ENCODE measurements at regions of chr18 and their contacts with region 1.

Region 1: DNA sequence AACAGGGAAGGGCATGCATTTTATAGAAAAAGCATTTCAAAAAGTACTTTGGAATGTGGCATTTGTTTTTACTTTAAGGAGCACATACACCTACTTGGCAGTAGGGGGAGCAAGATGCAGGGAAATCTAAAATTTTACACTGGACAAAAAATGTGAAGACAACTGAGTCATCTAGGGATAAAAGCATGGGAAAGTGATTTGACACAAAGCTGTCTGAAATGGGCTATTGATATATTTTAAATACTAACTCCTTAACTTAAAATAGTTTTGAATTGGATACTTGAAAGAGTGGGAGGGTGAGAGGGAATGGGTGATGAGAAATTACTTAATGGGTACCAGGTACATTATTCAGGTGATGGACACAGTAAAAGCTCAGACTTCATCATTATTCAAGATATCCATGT is 15.8 kb downstream of the TMEM200C start:
- DNase-seq: peak; percentile 8
- H3K4me3 ChIP-seq: no peak overlapping the region
- H3K27ac ChIP-seq: no peak overlapping the region
- H3K4me1 ChIP-seq: no peaks in the 10 kb centered on the region
- H3K27me3 ChIP-seq: no peaks in the 10 kb centered on the region
- CTCF ChIP-seq: peak; percentile 73 to 81

Region 2: GRCh38 chr18:5073026-5073944 is 806.2 kb before region 1 on chr18:
- CTCF ChIA-PET with region 1: no interaction called
- dilution Hi-C with region 1: no loop called
- in situ Hi-C with region 1: no loop called
- intact Hi-C with region 1: loop called (anchors 10 kb)
- DNase-seq: peak; percentile 4
- H3K4me3 ChIP-seq: no peak overlapping the region
- H3K27ac ChIP-seq: no peak overlapping the region
- H3K4me1 ChIP-seq: no peaks in the 10 kb centered on the region
- H3K27me3 ChIP-seq: no peaks in the 10 kb centered on the region
- CTCF ChIP-seq: peak; percentile 34 to 54

Region 3: DNA sequence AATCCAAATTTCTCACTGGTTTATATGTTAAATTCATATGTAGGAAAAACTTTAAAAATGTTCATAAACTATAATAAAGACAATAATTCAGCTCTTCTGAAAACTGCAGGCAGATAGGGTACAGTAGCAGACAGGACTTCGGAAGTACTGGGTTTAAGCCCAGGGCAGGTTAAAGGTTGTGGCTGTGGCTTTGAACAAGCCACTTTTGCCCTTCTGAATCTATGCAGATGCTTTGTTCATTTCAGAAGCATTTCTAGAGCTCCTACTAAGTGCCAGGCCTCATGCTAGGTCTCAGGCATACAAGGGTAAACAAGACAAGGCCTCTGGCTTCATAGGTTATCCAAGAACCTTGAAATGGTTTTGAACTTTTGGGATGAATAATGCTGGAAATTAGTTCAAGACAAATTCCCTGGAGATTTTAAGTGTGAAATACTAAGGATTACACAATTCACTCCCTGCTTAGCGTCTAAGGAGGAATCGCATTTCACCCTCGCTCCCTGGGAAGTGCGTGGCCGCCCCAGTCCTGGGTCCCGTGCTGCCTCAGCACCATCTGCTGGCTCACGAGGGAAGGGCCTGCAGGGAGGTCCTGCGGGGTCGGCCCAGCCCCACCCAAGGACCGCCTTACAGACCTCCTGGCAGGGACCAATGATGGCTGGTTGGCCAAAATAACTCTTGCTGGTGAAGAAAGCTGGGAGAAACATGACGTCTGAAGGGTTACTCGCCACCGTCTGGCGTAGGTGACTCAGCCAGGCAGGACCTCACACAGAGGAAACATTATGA is 602.9 kb after region 1 on chr18:
- CTCF ChIA-PET with region 1: no interaction called
- dilution Hi-C with region 1: no loop called
- in situ Hi-C with region 1: no loop called
- intact Hi-C with region 1: loop called (anchors 1 kb)
- DNase-seq: peak; percentile 93
- H3K4me3 ChIP-seq: no peak overlapping the region
- H3K27ac ChIP-seq: peak overlapping the region; percentile 29
- H3K4me1 ChIP-seq: peaks cover 7% of the 10 kb centered on the region
- H3K27me3 ChIP-seq: no peaks in the 10 kb centered on the region
- CTCF ChIP-seq: peak in 1 of 2 donors; percentile 37

Region 4: DNA sequence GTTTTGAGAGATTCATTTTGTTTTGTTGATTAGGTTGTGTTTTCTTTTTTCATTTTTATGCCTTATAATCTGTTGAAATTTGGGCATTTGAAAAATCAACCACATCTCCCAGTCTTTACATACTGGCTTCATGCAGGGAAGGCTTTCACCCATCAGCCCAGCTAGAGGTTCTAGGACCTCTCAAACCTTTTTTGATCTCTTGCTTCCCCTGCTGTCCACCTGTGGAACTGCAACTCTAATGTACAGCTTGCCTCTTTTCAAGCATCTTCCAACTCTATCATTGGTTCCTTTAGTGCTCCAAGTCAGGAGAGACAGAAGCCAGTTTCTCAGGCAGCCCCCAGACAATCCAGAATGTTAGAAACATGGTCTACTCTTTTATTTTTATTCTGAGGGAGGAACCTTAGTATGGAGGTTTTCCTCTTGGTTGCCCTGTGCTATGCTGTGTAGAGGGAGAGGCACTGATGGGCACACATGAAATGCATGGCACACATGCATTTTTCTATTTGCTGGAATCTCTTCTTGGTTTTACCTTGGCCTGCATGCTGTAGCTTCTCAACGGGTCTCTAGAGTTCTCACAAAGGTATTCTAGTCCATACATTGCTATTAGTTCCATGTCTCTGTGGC is 642.4 kb after region 1 on chr18:
- CTCF ChIA-PET with region 1: interaction called, 3 read pairs
- dilution Hi-C with region 1: no loop called
- in situ Hi-C with region 1: loop called (anchors 5 to 10 kb)
- intact Hi-C with region 1: loop called (anchors 1 kb)
- DNase-seq: peak; percentile 56
- H3K4me3 ChIP-seq: no peak overlapping the region
- H3K27ac ChIP-seq: no peak overlapping the region
- H3K4me1 ChIP-seq: no peaks in the 10 kb centered on the region
- H3K27me3 ChIP-seq: no peaks in the 10 kb centered on the region
- CTCF ChIP-seq: peak; percentile 85 to 94

Region 5: DNA sequence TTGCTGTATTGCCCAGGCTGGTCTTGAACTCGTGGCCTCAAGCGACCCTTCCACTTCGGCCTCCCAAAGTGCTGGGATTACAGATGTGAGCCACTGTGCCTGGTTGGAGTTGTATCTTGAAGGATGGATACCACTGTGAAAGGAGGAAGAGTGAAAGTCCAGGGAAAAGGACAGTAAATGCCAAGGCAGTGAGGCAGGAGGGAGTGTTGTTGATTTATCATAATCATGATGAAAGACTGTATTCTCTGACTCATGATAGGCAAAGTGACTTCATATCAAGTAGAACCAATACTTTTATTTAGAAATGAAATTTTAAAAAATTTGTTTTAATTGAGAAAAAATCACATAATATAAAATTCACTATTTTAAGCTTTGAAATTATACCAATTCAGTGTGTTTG is 1012.3 kb after region 1 on chr18:
- CTCF ChIA-PET with region 1: no interaction called
- dilution Hi-C with region 1: no loop called
- in situ Hi-C with region 1: loop called (anchors 10 to 25 kb)
- intact Hi-C with region 1: loop called (anchors 1 kb)
- DNase-seq: peak; percentile 41
- H3K4me3 ChIP-seq: no peak overlapping the region
- H3K27ac ChIP-seq: no peak overlapping the region
- H3K4me1 ChIP-seq: no peaks in the 10 kb centered on the region
- H3K27me3 ChIP-seq: peaks cover 2% of the 10 kb centered on the region
- CTCF ChIP-seq: no peak

Region 6: GRCh38 chr18:7164323-7165004 is 1285.0 kb after region 1 on chr18:
- CTCF ChIA-PET with region 1: no interaction called
- dilution Hi-C with region 1: loop called (anchors 10 kb)
- in situ Hi-C with region 1: no loop called
- intact Hi-C with region 1: no loop called
- DNase-seq: no peak
- H3K4me3 ChIP-seq: no peak overlapping the region
- H3K27ac ChIP-seq: no peak overlapping the region
- H3K4me1 ChIP-seq: no peaks in the 10 kb centered on the region
- H3K27me3 ChIP-seq: no peaks in the 10 kb centered on the region
- CTCF ChIP-seq: peak in 1 of 2 donors; percentile 30

Region 7: DNA sequence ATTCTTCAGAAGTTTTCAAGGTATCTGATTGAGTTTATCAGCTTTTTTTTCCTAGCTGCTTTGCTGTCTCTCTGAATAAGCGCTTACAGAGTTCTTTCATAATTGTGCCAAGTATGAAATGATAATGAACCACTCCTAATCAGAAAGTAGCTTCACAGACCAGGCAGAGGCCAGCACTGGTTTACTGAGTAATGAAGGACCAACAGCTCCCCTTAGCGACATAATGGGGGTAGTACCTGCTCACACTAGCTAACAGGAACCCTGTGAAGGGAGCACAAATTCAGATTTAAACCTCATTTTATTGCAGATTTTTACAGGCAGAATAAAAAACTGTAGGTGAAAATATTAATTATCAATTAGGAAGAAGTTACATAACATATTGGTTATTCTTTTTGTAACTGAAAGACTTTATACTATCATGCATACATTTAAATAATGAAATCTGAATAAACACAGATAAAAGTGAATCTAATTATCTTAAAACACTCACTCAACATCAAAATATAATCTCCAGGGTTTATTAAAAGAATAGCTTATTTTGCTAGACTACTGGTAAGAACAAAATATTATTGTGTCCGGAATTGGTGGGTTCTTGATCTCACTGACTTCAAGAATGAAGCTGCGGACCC is 1297.7 kb after region 1 on chr18:
- CTCF ChIA-PET with region 1: no interaction called
- dilution Hi-C with region 1: no loop called
- in situ Hi-C with region 1: no loop called
- intact Hi-C with region 1: loop called (anchors 5 kb)
- DNase-seq: peak; percentile 72
- H3K4me3 ChIP-seq: no peak overlapping the region
- H3K27ac ChIP-seq: no peak overlapping the region
- H3K4me1 ChIP-seq: no peaks in the 10 kb centered on the region
- H3K27me3 ChIP-seq: no peaks in the 10 kb centered on the region
- CTCF ChIP-seq: peak; percentile 87 to 91

Measured in mammary epithelial cell (primary cell).